Panc1 (cell line): ENCODE measurements at regions of chr3 and their contacts with region 1.

Region 1: DNA sequence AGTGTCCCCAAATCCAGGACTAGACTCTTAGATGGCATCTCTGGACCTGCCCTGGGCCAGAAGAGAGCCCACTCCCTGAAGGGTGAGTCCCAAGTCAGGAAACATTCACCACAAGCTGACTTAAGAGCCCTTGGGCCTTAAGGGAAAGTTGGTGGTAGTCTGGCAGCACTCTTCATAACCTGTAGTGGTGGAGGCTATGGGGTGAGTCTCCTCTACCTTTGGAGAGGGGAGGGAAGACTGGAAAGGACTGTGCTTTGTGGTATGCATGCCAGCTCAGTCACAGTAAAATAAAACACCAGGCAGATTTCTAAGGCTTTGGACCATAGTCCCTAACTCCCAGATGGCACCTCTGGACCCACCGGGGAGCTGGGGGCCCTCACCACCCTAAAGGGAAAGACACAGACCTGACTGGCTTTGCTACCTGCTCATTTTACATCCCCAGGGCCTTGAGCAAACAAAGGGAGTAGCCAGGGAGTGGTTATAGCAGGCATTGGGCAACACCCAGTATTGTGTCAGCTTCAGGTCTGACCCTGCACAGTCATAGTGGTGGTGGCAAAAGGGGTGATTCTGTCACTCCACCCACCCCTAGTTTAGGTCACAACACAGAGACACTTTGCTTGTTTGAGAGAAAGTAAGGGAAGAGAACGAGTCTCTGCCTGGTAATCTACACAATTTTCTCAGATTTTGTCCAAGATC is 352.3 kb downstream of the DIPK2A start:
- DNase-seq: no peak
- ATAC-seq: no peak
- H3K4me3 ChIP-seq: no peak overlapping the region
- H3K27ac ChIP-seq: no peak overlapping the region
- H3K4me1 ChIP-seq: no peaks in the 10 kb centered on the region
- H3K27me3 ChIP-seq: no peaks in the 10 kb centered on the region
- CTCF ChIP-seq: no peak

Region 2: GRCh38 chr3:143171141-143171970 is 1152.6 kb before region 1 on chr3:
- CTCF ChIA-PET with region 1: no interaction called
- POLR2A ChIA-PET with region 1: no interaction called
- in situ Hi-C with region 1: no loop called
- intact Hi-C with region 1: loop called (anchors 10 kb)
- DNase-seq: no peak
- ATAC-seq: no peak
- H3K4me3 ChIP-seq: no peak overlapping the region
- H3K27ac ChIP-seq: no peak overlapping the region
- H3K4me1 ChIP-seq: no peaks in the 10 kb centered on the region
- H3K27me3 ChIP-seq: no peaks in the 10 kb centered on the region
- CTCF ChIP-seq: no peak

Region 3: GRCh38 chr3:144499001-144499745 is 175.2 kb after region 1 on chr3:
- CTCF ChIA-PET with region 1: no interaction called
- POLR2A ChIA-PET with region 1: no interaction called
- in situ Hi-C with region 1: no loop called
- intact Hi-C with region 1: no loop called
- DNase-seq: no peak
- ATAC-seq: no peak
- H3K4me3 ChIP-seq: no peak overlapping the region
- H3K27ac ChIP-seq: no peak overlapping the region
- H3K4me1 ChIP-seq: no peaks in the 10 kb centered on the region
- H3K27me3 ChIP-seq: no peaks in the 10 kb centered on the region
- CTCF ChIP-seq: no peak